K562 (cell line): ENCODE measurements at regions of chr12 and their contacts with region 1.

Region 1: GRCh38 chr12:23055004-23055403 is 430.0 kb downstream of the ETNK1 start:
- DNase-seq: peak; percentile 8 to 26 (median 14)
- ATAC-seq: peak; percentile 66; the same call in 2 of the 3 replicates
- H3K4me3 ChIP-seq: no peak overlapping the region
- H3K27ac ChIP-seq: no peak overlapping the region
- H3K4me1 ChIP-seq: no peaks in the 10 kb centered on the region
- H3K27me3 ChIP-seq: no peaks in the 10 kb centered on the region
- CTCF ChIP-seq: peak; percentile 28 to 54 (median 52); a peak in 5 of 6 replicates
- EP300 ChIP-seq: no peak
- POLR2A ChIP-seq: no peak
- RAD21 ChIP-seq: peak in 1 of 2 experiments; percentile 58; a peak in 2 of 4 replicates

Region 2: GRCh38 chr12:22712083-22712482 is 342.9 kb before region 1 on chr12:
- CTCF ChIA-PET with region 1: interaction called, 4 read pairs
- POLR2A ChIA-PET with region 1: no interaction called
- in situ Hi-C with region 1: no loop called
- intact Hi-C with region 1: loop called (anchors 10 kb)
- DNase-seq: no peak
- ATAC-seq: no peak; the same call in 2 of the 3 replicates
- H3K4me3 ChIP-seq: no peak overlapping the region
- H3K27ac ChIP-seq: no peak overlapping the region
- H3K4me1 ChIP-seq: no peaks in the 10 kb centered on the region
- H3K27me3 ChIP-seq: no peaks in the 10 kb centered on the region
- CTCF ChIP-seq: no peak
- EP300 ChIP-seq: no peak
- POLR2A ChIP-seq: no peak
- RAD21 ChIP-seq: no peak

Region 3: GRCh38 chr12:22856178-22856577 is 198.8 kb before region 1 on chr12:
- CTCF ChIA-PET with region 1: no interaction called
- POLR2A ChIA-PET with region 1: no interaction called
- in situ Hi-C with region 1: no loop called
- intact Hi-C with region 1: loop called (anchors 5 kb)
- DNase-seq: peak; percentile 12 to 30 (median 15)
- ATAC-seq: no peak
- H3K4me3 ChIP-seq: no peak overlapping the region
- H3K27ac ChIP-seq: no peak overlapping the region
- H3K4me1 ChIP-seq: no peaks in the 10 kb centered on the region
- H3K27me3 ChIP-seq: no peaks in the 10 kb centered on the region
- CTCF ChIP-seq: peak; percentile 33 to 72 (median 35); a peak in 4 of 6 replicates
- EP300 ChIP-seq: no peak
- POLR2A ChIP-seq: no peak
- RAD21 ChIP-seq: peak; percentile 79 to 88

Region 4: GRCh38 chr12:22993609-22994315 is 61.2 kb before region 1 on chr12:
- CTCF ChIA-PET with region 1: no interaction called
- POLR2A ChIA-PET with region 1: no interaction called
- in situ Hi-C with region 1: no loop called
- intact Hi-C with region 1: no loop called
- DNase-seq: no peak
- ATAC-seq: no peak
- H3K4me3 ChIP-seq: no peak overlapping the region
- H3K27ac ChIP-seq: no peak overlapping the region
- H3K4me1 ChIP-seq: no peaks in the 10 kb centered on the region
- H3K27me3 ChIP-seq: no peaks in the 10 kb centered on the region
- CTCF ChIP-seq: no peak
- EP300 ChIP-seq: no peak
- POLR2A ChIP-seq: no peak
- RAD21 ChIP-seq: no peak

Region 5: GRCh38 chr12:23028158-23028802 is 26.7 kb before region 1 on chr12:
- CTCF ChIA-PET with region 1: no interaction called
- POLR2A ChIA-PET with region 1: no interaction called
- in situ Hi-C with region 1: no loop called
- intact Hi-C with region 1: no loop called
- DNase-seq: no peak
- ATAC-seq: no peak
- H3K4me3 ChIP-seq: no peak overlapping the region
- H3K27ac ChIP-seq: no peak overlapping the region
- H3K4me1 ChIP-seq: no peaks in the 10 kb centered on the region
- H3K27me3 ChIP-seq: no peaks in the 10 kb centered on the region
- CTCF ChIP-seq: no peak
- EP300 ChIP-seq: no peak
- POLR2A ChIP-seq: no peak
- RAD21 ChIP-seq: no peak